ENCODE measurements at regions of chr7 and their contacts with region 1.

Region 1: DNA sequence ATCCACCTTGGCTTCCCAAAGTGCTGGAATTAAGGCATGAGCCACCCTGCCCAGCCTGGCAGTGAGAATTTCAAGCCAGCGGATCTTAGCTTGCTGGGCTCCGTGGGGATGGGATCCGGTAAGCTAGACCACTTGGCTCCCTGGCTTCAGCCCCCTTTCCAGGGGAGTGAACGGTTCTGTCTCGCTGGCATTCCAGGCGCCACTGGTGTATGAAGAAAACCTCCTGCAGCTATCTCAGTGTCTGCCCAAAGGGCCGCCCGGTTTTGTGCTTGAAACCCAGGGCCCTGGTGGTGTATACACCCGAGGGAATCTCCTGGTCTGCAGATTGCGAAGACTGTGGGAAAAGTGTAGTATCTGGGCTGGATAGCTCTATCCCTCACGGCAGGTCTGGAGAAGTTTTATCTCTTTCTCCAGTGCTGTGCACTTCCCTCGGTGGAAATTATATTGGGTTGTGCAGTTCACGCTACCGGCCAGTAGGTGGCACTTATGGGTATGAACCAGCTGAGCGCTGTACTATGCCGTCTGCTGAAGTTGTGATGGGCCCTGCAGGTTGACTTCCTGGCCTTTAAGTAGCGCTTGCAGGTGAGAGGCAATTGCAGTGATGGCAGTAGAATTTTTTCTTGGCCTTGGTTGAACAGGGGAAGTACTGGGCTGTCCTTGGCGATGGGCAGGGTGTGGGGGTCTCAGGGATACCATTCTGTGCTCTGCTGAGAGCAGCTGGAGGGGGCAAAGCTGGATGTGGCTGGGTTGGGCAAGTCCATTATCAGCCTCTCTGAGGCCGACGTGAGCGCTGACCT is 138.0 kb upstream of the MTPN start:
- DNase-seq: peak; percentile 39
- H3K4me3 ChIP-seq: no peak overlapping the region
- H3K27ac ChIP-seq: no peak overlapping the region
- H3K4me1 ChIP-seq: no peaks in the 10 kb centered on the region
- H3K27me3 ChIP-seq: no peaks in the 10 kb centered on the region
- CTCF ChIP-seq: peak; percentile 74 to 78
- POLR2A ChIP-seq: no peak

Region 2: GRCh38 chr7:136104269-136104603 is 10.9 kb before region 1 on chr7:
- CTCF ChIA-PET with region 1: interaction called, 12 read pairs
- POLR2A ChIA-PET with region 1: no interaction called
- dilution Hi-C with region 1: no loop called
- intact Hi-C with region 1: no loop called
- DNase-seq: no peak
- H3K4me3 ChIP-seq: no peak overlapping the region
- H3K27ac ChIP-seq: no peak overlapping the region
- H3K4me1 ChIP-seq: no peaks in the 10 kb centered on the region
- H3K27me3 ChIP-seq: no peaks in the 10 kb centered on the region
- CTCF ChIP-seq: no peak
- POLR2A ChIP-seq: no peak

Region 3: DNA sequence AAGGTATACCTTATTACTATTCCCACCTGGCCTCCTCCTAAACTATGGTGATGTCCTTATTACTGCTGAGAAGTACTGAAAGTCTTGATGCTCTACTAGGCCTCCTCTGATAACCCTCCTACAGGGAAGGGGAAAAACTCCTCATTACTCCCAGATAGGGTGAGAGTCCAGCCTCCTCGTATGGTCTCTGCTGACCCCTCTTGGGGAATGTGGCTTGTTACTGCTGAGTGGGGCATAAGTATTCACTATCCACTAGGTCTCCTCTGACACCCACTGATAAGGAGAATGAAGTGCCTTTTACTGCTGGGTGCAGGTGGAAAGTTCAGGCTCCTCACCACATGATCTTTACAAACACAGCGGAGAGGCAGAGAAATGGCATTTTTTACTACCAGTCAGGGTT is 976.2 kb after region 1 on chr7:
- CTCF ChIA-PET with region 1: no interaction called
- POLR2A ChIA-PET with region 1: no interaction called
- dilution Hi-C with region 1: no loop called
- intact Hi-C with region 1: loop called (anchors 1 kb)
- DNase-seq: peak; percentile 52
- H3K4me3 ChIP-seq: no peak overlapping the region
- H3K27ac ChIP-seq: no peak overlapping the region
- H3K4me1 ChIP-seq: no peaks in the 10 kb centered on the region
- H3K27me3 ChIP-seq: no peaks in the 10 kb centered on the region
- CTCF ChIP-seq: peak; percentile 41 to 62
- POLR2A ChIP-seq: no peak

Measured in endothelial cell of umbilical vein (primary cell).